Sigmoid colon (tissue), 7 donors: ENCODE measurements at regions of chr13 and their contacts with region 1.

Region 1: GRCh38 chr13:110915057-110915873 is at the start of gene ANKRD10:
- DNase-seq: peak; percentile 99
- H3K4me3 ChIP-seq: peak within 1 kb of the TSS; percentile 78 to 98 (median 80)
- H3K27ac ChIP-seq: peak within 1 kb of the TSS; percentile 98 to 100 (median 100)
- H3K4me1 ChIP-seq: peaks cover 0 to 44% (median 38%) of the 10 kb centered on the region in 4 donors
- H3K27me3 ChIP-seq: no peaks in the 10 kb centered on the region
- CTCF ChIP-seq: peak; percentile 74 to 86 (median 84)
- EP300 ChIP-seq: peak in 1 of 4 donors; percentile 44
- POLR2A ChIP-seq: peak in 1 of 2 donors; percentile 51
- total RNA-seq, gene ANKRD10: 141 to 179 (median 150) TPM

Region 2: GRCh38 chr13:110615322-110616102 is 299.8 kb before region 1 on chr13 and contains the start of gene NAXD:
- intact Hi-C with region 1: loop called (anchors 5 kb)
- DNase-seq: peak; percentile 97
- H3K4me3 ChIP-seq: peak within 1 kb of the TSS; percentile 80 to 93 (median 81)
- H3K27ac ChIP-seq: peak within 1 kb of the TSS; percentile 94 to 97 (median 96)
- H3K4me1 ChIP-seq: peaks cover 0 to 50% (median 46%) of the 10 kb centered on the region in 4 donors
- H3K27me3 ChIP-seq: no peaks in the 10 kb centered on the region
- CTCF ChIP-seq: no peak
- EP300 ChIP-seq: peak in 1 of 4 donors; percentile 82
- POLR2A ChIP-seq: peak; percentile 35 to 50
- total RNA-seq, gene NAXD: 33.5 to 41.1 (median 37.2) TPM

Region 3: GRCh38 chr13:110869805-110870706 is 45.2 kb before region 1 on chr13:
- intact Hi-C with region 1: loop called (anchors 2 kb)
- DNase-seq: peak; percentile 96
- H3K4me3 ChIP-seq: peak overlapping the region in 3 of 4 donors; percentile 25 to 36 (median 34)
- H3K27ac ChIP-seq: peak overlapping the region; percentile 75 to 88 (median 82)
- H3K4me1 ChIP-seq: peaks cover 0 to 36% (median 28%) of the 10 kb centered on the region in 4 donors
- H3K27me3 ChIP-seq: no peaks in the 10 kb centered on the region
- CTCF ChIP-seq: peak in 3 of 4 experiments; percentile 26 to 36 (median 27)
- EP300 ChIP-seq: peak in 3 of 4 donors; percentile 28 to 97 (median 72)
- POLR2A ChIP-seq: no peak

Region 4: GRCh38 chr13:111006506-111007031 is 91.3 kb after region 1 on chr13:
- intact Hi-C with region 1: loop called (anchors 2 kb)
- DNase-seq: peak; percentile 94
- H3K4me3 ChIP-seq: peak overlapping the region in 3 of 4 donors; percentile 1 to 15 (median 5)
- H3K27ac ChIP-seq: peak overlapping the region; percentile 77 to 94 (median 84)
- H3K4me1 ChIP-seq: peaks cover 0 to 26% (median 23%) of the 10 kb centered on the region in 4 donors
- H3K27me3 ChIP-seq: no peaks in the 10 kb centered on the region
- CTCF ChIP-seq: no peak
- EP300 ChIP-seq: peak in 2 of 4 donors; percentile 16 to 66
- POLR2A ChIP-seq: no peak

Region 5: DNA sequence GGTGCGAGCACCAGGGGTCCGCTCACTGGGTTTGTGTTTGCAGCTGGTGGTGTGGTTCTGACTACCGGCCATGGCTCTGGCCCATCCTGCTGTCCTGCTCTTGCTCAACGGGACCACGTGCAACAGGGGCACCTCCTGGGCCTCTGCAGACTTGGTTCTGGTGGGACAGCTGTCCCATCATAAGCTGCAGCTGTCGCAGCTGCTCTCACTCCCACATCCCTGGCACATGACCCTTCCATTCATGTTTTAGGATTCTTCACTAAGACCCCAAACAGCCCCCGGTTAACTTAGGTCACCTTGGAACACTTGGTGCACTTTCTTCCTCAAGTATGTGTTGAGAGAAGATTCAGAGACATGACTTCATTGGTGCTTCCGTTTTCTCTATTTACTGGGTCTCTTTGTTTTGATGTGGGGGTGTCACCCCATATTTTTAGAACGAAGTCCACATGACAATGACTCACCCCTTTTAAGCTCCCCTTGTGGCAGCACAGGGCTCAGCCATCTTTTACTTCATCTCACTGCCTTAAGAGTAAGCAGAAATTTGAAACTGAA is 131.4 kb after region 1 on chr13:
- intact Hi-C with region 1: loop called (anchors 2 kb)
- DNase-seq: no peak
- H3K4me3 ChIP-seq: no peak overlapping the region
- H3K27ac ChIP-seq: peak overlapping the region in 1 of 4 donors; percentile 0
- H3K4me1 ChIP-seq: peaks cover 0 to 6% (median 0%) of the 10 kb centered on the region in 4 donors
- H3K27me3 ChIP-seq: no peaks in the 10 kb centered on the region
- CTCF ChIP-seq: no peak
- EP300 ChIP-seq: no peak
- POLR2A ChIP-seq: no peak

Region 6: DNA sequence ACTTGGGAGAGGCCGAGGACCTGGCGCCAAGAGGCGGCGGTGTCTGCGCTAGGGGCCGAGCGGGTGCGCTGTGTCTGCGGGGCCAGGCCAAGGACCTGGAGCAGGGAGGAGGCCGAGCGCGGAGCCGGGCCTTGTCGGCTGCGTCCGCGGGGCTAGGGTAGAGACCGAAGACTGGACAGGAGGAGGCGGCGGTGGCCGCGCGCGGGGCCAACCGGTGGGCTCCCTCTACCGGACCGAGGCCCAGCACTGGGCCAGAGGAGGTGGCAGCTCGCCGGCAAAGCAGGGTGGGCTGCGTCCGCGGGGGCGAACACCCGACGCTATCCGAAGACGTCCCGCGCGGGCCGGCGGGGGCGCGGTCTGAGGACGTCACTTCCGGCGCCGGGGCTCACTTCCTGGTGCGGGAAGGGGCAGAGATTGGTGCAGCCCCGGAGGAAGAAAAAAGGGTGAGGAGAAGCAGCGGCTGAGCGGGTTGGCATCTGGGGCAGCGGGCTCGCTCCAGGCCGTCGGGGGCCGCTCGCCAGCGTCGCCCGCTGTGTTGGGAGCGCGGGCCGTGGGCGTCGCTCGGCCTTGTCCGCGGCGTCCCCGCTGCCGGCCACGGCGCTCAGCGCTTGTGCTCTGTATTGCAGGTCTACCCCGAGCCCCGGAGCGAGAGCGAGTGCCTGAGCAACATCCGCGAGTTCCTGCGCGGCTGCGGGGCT is 238.2 kb after region 1 on chr13:
- intact Hi-C with region 1: loop called (anchors 5 kb)
- DNase-seq: peak; percentile 96
- H3K4me3 ChIP-seq: peak overlapping the region; percentile 76 to 93 (median 87)
- H3K27ac ChIP-seq: peak overlapping the region; percentile 95 to 98 (median 98)
- H3K4me1 ChIP-seq: peaks cover 0 to 43% (median 31%) of the 10 kb centered on the region in 4 donors
- H3K27me3 ChIP-seq: no peaks in the 10 kb centered on the region
- CTCF ChIP-seq: no peak
- EP300 ChIP-seq: peak in 1 of 4 donors; percentile 26
- POLR2A ChIP-seq: peak; percentile 91 to 92

Region 7: GRCh38 chr13:111216166-111216960 is 301.1 kb after region 1 on chr13:
- intact Hi-C with region 1: loop called (anchors 5 kb)
- DNase-seq: no peak
- H3K4me3 ChIP-seq: no peak overlapping the region
- H3K27ac ChIP-seq: peak overlapping the region in 1 of 4 donors; percentile 48
- H3K4me1 ChIP-seq: peaks cover 0 to 56% (median 41%) of the 10 kb centered on the region in 4 donors
- H3K27me3 ChIP-seq: no peaks in the 10 kb centered on the region
- CTCF ChIP-seq: peak in 1 of 4 experiments; percentile 29
- EP300 ChIP-seq: no peak
- POLR2A ChIP-seq: no peak